OCI-LY7 (cell line): ENCODE measurements at regions of chr12 and their contacts with region 1.

Region 1: GRCh38 chr12:8644345-8645248 is 18.0 kb downstream of the MFAP5 start:
- DNase-seq: peak; percentile 90
- H3K4me3 ChIP-seq: peak overlapping the region; percentile 56
- H3K27ac ChIP-seq: peak overlapping the region; percentile 98
- H3K4me1 ChIP-seq: peaks cover 80% of the 10 kb centered on the region
- CTCF ChIP-seq: no peak

Region 2: GRCh38 chr12:8629486-8630033 is 15.0 kb before region 1 on chr12:
- CTCF ChIA-PET with region 1: no interaction called
- POLR2A ChIA-PET with region 1: interaction called, 12 read pairs
- intact Hi-C with region 1: no loop called
- DNase-seq: peak; percentile 47
- H3K4me3 ChIP-seq: peak overlapping the region; percentile 0
- H3K27ac ChIP-seq: peak overlapping the region; percentile 40
- H3K4me1 ChIP-seq: peaks cover 17% of the 10 kb centered on the region
- CTCF ChIP-seq: no peak

Region 3: GRCh38 chr12:8655421-8655820 is 10.8 kb after region 1 on chr12:
- CTCF ChIA-PET with region 1: interaction called, 3 read pairs
- POLR2A ChIA-PET with region 1: interaction called, 10 read pairs
- intact Hi-C with region 1: no loop called
- DNase-seq: no peak
- H3K4me3 ChIP-seq: no peak overlapping the region
- H3K27ac ChIP-seq: peak overlapping the region; percentile 27
- H3K4me1 ChIP-seq: peaks cover 37% of the 10 kb centered on the region
- CTCF ChIP-seq: no peak

Region 4: GRCh38 chr12:8687846-8688601 is 43.4 kb after region 1 on chr12:
- CTCF ChIA-PET with region 1: no interaction called
- POLR2A ChIA-PET with region 1: interaction called, 3 read pairs
- intact Hi-C with region 1: loop called (anchors 2 kb)
- DNase-seq: peak; percentile 74
- H3K4me3 ChIP-seq: peak overlapping the region; percentile 31
- H3K27ac ChIP-seq: peak overlapping the region; percentile 52
- H3K4me1 ChIP-seq: peaks cover 69% of the 10 kb centered on the region
- CTCF ChIP-seq: no peak

Region 5: GRCh38 chr12:8697476-8698131 is 53.0 kb after region 1 on chr12 and contains the start of gene RIMKLB:
- CTCF ChIA-PET with region 1: no interaction called
- POLR2A ChIA-PET with region 1: interaction called, 10 read pairs
- intact Hi-C with region 1: loop called (anchors 2 kb)
- DNase-seq: peak; percentile 89
- H3K4me3 ChIP-seq: peak within 1 kb of the TSS; percentile 86
- H3K27ac ChIP-seq: peak within 1 kb of the TSS; percentile 100
- H3K4me1 ChIP-seq: peaks cover 73% of the 10 kb centered on the region
- CTCF ChIP-seq: 0 out of 2 replicates have a peak, but pooled peaks have one; percentile 4
- total RNA-seq, gene RIMKLB: 109 and 117 TPM in 2 replicates